Heart right ventricle (tissue), 16 donors: ENCODE measurements at regions of chr12 and their contacts with region 1.

Region 1: GRCh38 chr12:57899010-57899662 is 42.2 kb upstream of the ATP23 start:
- DNase-seq: peak in 1 of 2 donors; percentile 43
- ATAC-seq: peak in 4 of 8 donors; percentile 11 to 54 (median 35)
- H3K4me3 ChIP-seq: no peak overlapping the region
- H3K27ac ChIP-seq: peak overlapping the region in 9 of 10 donors; percentile 58 to 100 (median 98)
- H3K4me1 ChIP-seq: peaks cover 25 to 58% (median 48%) of the 10 kb centered on the region in 9 donors
- H3K27me3 ChIP-seq: no peaks in the 10 kb centered on the region
- CTCF ChIP-seq: no peak

Region 2: DNA sequence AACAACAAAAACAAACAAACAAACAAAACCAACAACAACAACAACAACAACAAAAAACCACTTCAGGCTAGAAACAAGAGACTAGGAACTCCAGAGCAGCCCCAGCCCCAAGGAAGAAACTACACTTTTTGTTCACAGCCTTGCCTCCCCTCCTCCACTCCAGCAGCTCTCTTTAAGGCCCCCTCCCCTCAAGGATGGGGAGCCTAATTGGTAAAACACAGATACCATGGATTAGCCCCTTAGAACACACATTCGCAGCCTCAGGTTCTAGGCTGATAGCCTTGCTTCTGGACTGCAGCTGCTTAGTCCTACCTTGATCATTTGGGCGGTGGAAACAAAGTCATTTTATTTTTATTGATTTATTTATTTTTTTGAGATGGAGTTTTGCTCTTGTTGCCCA is 68.7 kb before region 1 on chr12:
- intact Hi-C with region 1: loop called in 9 of 10 experiments (anchors 2 to 5 kb)
- DNase-seq: no peak
- ATAC-seq: no peak
- H3K4me3 ChIP-seq: no peak overlapping the region
- H3K27ac ChIP-seq: peak overlapping the region in 7 of 10 donors; percentile 35 to 100 (median 76)
- H3K4me1 ChIP-seq: peaks cover 29 to 97% (median 83%) of the 10 kb centered on the region in 9 donors
- H3K27me3 ChIP-seq: no peaks in the 10 kb centered on the region
- CTCF ChIP-seq: no peak